Calu3 (cell line): ENCODE measurements at regions of chr17 and their contacts with region 1.

Region 1: GRCh38 chr17:48259694-48260291 is 152.2 kb downstream of the SNX11 start:
- DNase-seq: peak; percentile 60
- H3K4me3 Mint-ChIP-seq: no peak overlapping the region
- H3K27ac Mint-ChIP-seq: peak overlapping the region; percentile 73
- H3K4me1 Mint-ChIP-seq: peaks cover 55% of the 10 kb centered on the region
- H3K27me3 Mint-ChIP-seq: no peaks in the 10 kb centered on the region
- CTCF ChIP-seq: peak; percentile 84

Region 2: DNA sequence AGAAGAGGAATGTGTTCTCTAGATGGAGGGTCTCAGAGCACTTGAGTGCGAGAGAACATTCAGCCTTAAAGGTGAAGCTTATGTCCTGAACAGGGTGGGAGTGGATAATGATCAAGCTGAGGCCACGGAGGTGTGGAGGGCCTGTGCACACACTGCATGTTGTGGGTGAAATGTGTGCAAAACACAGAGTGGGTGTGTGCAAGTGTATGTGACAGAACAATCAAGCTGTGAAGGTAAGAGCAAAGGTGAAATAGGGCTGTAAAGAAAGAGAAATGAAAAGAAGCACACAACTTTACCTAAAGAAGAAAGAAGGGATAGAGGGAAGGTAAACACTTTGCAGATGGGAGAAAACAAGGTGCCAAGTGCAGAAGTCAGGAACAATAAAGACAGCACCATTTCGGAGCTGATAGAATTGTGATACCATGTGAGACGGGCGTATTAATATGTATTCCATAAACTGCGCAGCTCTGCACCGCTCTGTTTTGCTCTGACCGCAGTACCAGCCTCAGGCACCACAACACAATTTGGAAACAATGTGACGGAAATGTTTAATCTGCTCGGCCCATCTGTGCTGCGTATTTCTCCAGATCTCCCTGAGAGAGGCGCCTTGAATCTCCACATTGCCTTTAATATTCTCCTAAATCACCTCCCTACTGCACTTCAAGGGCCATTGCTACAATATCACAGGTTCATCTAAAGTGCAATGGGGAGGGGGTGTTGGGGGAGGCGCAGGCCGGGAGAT is 111.6 kb before region 1 on chr17:
- CTCF ChIA-PET with region 1: no interaction called
- intact Hi-C with region 1: no loop called
- DNase-seq: no peak
- H3K4me3 Mint-ChIP-seq: no peak overlapping the region
- H3K27ac Mint-ChIP-seq: no peak overlapping the region
- H3K4me1 Mint-ChIP-seq: no peaks in the 10 kb centered on the region
- H3K27me3 Mint-ChIP-seq: peaks cover 17% of the 10 kb centered on the region
- CTCF ChIP-seq: no peak

Region 3: DNA sequence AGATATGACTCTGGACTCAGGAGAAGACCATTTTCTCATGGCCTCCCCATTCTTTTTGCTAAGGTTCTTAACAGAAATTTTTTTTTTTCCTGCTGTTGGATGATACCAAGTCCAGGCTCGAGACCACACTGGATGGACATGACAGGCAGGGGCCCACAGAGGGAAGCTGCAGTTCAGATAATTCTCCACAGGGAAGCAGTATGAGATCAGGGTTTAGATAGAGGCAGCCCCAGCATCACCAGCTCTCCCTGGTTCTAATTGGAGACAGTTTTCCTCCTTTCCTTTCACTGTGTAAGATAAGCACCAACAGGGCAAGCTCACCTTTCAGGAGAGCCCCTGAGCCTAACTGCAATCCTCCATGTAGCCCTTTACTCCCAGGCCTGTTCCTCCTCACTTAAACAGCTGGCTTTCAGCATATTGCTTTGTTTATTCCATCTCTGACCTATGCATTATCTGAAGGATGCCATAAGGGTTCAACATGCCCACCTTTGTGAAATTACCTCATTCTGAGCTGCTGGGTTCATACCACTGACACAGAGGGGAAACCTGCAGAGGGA is 44.1 kb before region 1 on chr17:
- CTCF ChIA-PET with region 1: interaction called, 84 read pairs
- intact Hi-C with region 1: loop called (anchors 1 kb)
- DNase-seq: peak; percentile 78
- H3K4me3 Mint-ChIP-seq: no peak overlapping the region
- H3K27ac Mint-ChIP-seq: no peak overlapping the region
- H3K4me1 Mint-ChIP-seq: peaks cover 31% of the 10 kb centered on the region
- H3K27me3 Mint-ChIP-seq: no peaks in the 10 kb centered on the region
- CTCF ChIP-seq: peak; percentile 87

Region 4: GRCh38 chr17:48295362-48296288 is 35.8 kb after region 1 on chr17:
- CTCF ChIA-PET with region 1: interaction called, 35 read pairs
- intact Hi-C with region 1: no loop called
- DNase-seq: no peak
- H3K4me3 Mint-ChIP-seq: peak overlapping the region; percentile 46
- H3K27ac Mint-ChIP-seq: peak overlapping the region; percentile 94
- H3K4me1 Mint-ChIP-seq: peaks cover 75% of the 10 kb centered on the region
- H3K27me3 Mint-ChIP-seq: no peaks in the 10 kb centered on the region
- CTCF ChIP-seq: no peak

Region 5: DNA sequence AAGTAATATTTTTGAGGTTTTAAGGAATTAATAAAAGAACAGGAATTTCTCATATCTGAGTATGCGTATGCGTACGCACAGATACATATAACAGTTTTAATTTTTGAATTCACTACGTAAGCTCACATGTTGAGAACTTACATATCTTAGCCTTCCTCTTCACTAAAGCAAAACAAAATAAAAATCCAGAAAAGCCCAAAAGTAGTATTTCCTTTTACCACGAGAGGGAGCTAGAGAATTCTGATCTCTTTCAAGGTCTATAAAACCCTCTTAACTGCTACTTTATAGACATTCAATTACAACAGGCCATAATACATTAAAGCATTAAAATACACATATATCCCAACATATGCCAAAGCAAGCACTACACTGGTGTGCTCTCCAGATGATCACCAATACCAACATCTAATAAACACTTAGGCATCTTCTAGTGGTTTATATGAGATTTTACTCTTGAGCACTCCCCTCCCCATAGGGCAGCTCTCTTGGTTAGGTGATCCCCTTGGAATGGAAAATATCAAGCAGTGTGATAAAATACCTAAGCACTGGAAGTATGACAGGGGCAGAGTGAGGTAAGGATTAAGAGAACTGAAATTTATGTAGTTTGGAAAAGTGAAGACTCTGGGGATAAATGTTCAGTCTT is 76.2 kb after region 1 on chr17:
- CTCF ChIA-PET with region 1: interaction called, 29 read pairs
- intact Hi-C with region 1: loop called (anchors 5 kb)
- DNase-seq: peak; percentile 20
- H3K4me3 Mint-ChIP-seq: no peak overlapping the region
- H3K27ac Mint-ChIP-seq: no peak overlapping the region
- H3K4me1 Mint-ChIP-seq: no peaks in the 10 kb centered on the region
- H3K27me3 Mint-ChIP-seq: no peaks in the 10 kb centered on the region
- CTCF ChIP-seq: peak; percentile 50

Region 6: DNA sequence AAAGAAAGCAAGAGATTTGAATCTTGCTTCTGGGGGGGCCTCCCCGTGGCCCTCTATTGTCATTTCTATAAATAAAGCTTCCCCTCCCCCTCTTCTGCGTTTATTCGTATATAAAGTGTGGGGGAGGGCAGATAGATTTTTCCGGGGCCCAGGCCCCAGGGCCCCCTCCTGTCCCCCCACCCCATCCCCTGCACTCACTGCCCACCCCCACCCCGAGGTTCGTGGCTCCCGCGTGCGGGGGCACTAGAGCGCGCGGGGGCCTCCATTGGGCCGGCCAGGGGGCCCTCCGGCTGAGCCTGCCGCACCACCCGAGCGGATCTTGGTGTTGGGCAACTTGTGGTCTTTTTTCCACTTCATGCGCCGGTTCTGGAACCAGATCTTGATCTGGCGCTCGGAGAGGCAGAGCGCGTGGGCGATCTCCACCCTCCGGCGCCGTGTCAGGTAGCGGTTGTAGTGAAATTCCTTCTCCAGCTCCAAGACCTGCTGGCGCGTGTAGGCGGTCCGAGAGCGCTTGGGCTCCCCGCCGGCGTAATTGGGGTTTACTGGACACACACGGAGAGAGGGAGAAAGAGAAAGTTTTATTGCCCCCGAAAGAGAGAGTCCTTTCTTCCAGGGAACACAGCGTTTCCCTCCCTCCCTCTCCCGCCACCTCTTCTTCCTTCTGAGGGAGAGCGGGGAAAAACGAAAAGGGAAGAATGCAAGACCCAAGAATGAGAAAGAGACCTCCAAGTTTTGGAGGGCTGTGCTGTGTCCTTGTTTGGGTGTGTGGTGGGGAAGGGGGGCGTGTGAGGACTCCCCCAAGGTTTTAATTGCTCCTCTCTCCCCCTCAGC is 316.9 kb after region 1 on chr17:
- CTCF ChIA-PET with region 1: no interaction called
- intact Hi-C with region 1: no loop called
- DNase-seq: no peak
- H3K4me3 Mint-ChIP-seq: no peak overlapping the region
- H3K27ac Mint-ChIP-seq: peak overlapping the region; percentile 69
- H3K4me1 Mint-ChIP-seq: peaks cover 54% of the 10 kb centered on the region
- H3K27me3 Mint-ChIP-seq: peaks cover 20% of the 10 kb centered on the region
- CTCF ChIP-seq: no peak

Region 7: DNA sequence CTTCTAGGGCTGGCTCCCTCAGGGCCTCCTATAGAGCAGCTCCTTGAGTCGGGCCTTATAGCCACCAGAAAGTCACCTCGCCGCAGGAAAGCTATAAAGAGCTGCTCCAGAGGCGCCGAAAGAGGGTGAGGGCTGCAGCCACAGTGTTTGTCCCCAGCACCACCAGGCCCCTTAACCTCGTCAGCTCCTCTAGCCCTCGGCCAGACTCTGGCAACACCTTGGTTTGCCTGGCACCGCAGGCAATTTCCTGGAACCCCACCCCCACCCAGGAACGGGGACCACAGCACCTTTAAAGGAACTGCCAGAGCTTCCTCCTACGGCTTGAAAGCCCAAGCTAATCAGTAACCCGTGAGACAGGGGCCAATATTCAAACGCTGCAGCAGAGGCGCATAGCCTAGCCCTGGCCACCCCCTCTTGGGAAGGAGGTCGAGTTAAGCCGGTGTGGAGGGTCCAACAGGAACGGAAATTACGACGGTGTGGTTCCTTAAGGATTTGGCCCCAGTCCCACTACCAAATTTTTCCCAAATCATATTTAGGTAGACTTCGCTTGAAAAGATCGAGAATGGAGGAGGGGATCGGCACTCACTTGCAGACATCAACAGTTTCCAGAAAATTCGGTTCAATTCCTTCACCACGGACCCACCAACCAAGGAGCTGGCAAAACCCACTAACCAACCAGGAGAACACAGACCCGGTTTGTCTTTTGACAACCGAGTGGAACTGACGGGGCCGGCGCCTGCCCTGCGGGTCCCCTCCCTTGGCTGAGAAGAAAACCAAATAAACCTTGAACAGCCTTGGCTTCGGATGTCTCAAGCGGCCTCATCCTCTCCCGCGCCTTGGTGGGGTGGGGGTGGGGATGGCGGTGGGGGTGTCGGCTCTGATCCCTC is 342.0 kb after region 1 on chr17:
- CTCF ChIA-PET with region 1: interaction called, 10 read pairs
- intact Hi-C with region 1: no loop called
- DNase-seq: peak; percentile 88
- H3K4me3 Mint-ChIP-seq: peak overlapping the region; percentile 88
- H3K27ac Mint-ChIP-seq: peak overlapping the region; percentile 95
- H3K4me1 Mint-ChIP-seq: peaks cover 45% of the 10 kb centered on the region
- H3K27me3 Mint-ChIP-seq: peaks cover 8% of the 10 kb centered on the region
- CTCF ChIP-seq: no peak